ENCODE measurements at regions of chr6 and their contacts with region 1.

Region 1: GRCh38 chr6:169789982-169790927 is 38.8 kb downstream of the ERMARD start:
- DNase-seq: peak; percentile 82
- ATAC-seq: peak; percentile 89
- H3K4me3 ChIP-seq: peak overlapping the region; percentile 64 to 80 (median 65)
- H3K27ac ChIP-seq: peak overlapping the region; percentile 85
- H3K4me1 ChIP-seq: peaks cover 58% of the 10 kb centered on the region
- H3K27me3 ChIP-seq: no peaks in the 10 kb centered on the region
- CTCF ChIP-seq: peak; percentile 99
- EP300 ChIP-seq: 0 out of 4 replicates have a peak, but pooled peaks of 1 of the 2 experiments have one; percentile 5
- POLR2A ChIP-seq: peak; percentile 76 to 81
- RAD21 ChIP-seq: peak; percentile 99

Region 2: DNA sequence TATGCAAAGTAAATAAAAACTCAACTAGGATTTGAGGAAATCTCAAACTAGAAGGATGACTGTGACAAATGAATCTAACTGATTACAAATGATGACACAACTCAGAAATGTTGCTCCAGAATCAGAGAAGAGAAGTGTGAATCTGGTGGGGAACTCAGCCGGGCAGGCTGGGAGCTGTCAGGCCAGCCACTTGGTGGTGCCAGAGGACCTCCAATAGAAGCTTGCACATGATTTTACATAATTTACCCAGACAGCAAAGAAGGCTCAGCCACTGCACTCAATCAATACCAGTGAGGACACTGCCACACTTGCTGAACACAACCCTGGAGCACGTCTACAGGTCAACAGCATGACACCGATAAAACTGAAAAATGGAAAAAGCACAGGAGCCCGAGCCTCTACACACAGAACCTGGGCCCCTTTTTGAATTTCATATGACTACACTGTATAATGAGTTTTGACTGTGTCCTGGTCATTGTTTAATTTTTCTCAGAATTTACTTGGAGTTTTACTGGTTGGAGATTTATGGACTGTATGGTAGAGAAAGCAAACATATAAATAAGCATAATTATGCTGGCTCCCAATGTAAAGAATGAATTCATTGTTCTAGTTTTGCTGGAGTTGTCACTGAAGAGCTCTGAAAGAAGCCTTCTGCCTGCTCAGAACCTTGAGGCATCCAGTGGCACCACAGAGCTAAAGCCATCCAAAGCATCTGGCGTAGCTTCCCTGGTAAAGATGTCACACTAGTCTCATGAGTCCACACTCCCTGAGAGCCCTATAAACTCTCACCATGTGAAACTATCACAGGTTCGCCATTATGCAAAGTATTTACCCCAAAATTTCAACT is 833.1 kb before region 1 on chr6:
- CTCF ChIA-PET with region 1: no interaction called
- POLR2A ChIA-PET with region 1: no interaction called
- in situ Hi-C with region 1: no loop called
- intact Hi-C with region 1: loop called (anchors 1 kb)
- DNase-seq: peak; percentile 67
- ATAC-seq: peak; percentile 99
- H3K4me3 ChIP-seq: no peak overlapping the region
- H3K27ac ChIP-seq: no peak overlapping the region
- H3K4me1 ChIP-seq: no peaks in the 10 kb centered on the region
- H3K27me3 ChIP-seq: peaks cover 2 to 23% of the 10 kb centered on the region in 2 experiments; a peak in 3 of 5 replicates
- CTCF ChIP-seq: peak; percentile 92
- EP300 ChIP-seq: no peak
- POLR2A ChIP-seq: no peak
- RAD21 ChIP-seq: peak; percentile 86

Region 3: GRCh38 chr6:169723200-169723909 is 66.9 kb before region 1 on chr6:
- CTCF ChIA-PET with region 1: no interaction called
- POLR2A ChIA-PET with region 1: interaction called, 41 read pairs
- in situ Hi-C with region 1: no loop called
- intact Hi-C with region 1: no loop called
- DNase-seq: peak; percentile 39
- ATAC-seq: peak; percentile 20
- H3K4me3 ChIP-seq: peak overlapping the region; percentile 82 to 93 (median 90)
- H3K27ac ChIP-seq: peak overlapping the region; percentile 72
- H3K4me1 ChIP-seq: peaks cover 60% of the 10 kb centered on the region
- H3K27me3 ChIP-seq: no peaks in the 10 kb centered on the region; a peak in 1 of 5 replicates
- CTCF ChIP-seq: 0 out of 2 replicates have a peak, but pooled peaks have one; percentile 10
- EP300 ChIP-seq: no peak
- POLR2A ChIP-seq: no peak
- RAD21 ChIP-seq: peak; percentile 28; the same call in 1 of the 2 replicates

Region 4: GRCh38 chr6:169800668-169801395 is 10.6 kb after region 1 on chr6:
- CTCF ChIA-PET with region 1: interaction called, 4 read pairs
- POLR2A ChIA-PET with region 1: interaction called, 198 read pairs
- in situ Hi-C with region 1: no loop called
- intact Hi-C with region 1: loop called (anchors 1 kb)
- DNase-seq: peak; percentile 91
- ATAC-seq: peak; percentile 88
- H3K4me3 ChIP-seq: peak overlapping the region; percentile 41 to 74 (median 51)
- H3K27ac ChIP-seq: peak overlapping the region; percentile 82
- H3K4me1 ChIP-seq: peaks cover 80% of the 10 kb centered on the region
- H3K27me3 ChIP-seq: no peaks in the 10 kb centered on the region
- CTCF ChIP-seq: 0 out of 2 replicates have a peak, but pooled peaks have one; percentile 11
- EP300 ChIP-seq: peak; percentile 72 to 91
- POLR2A ChIP-seq: peak; percentile 55 to 72
- RAD21 ChIP-seq: no peak; the same call in 1 of the 2 replicates

Region 5: GRCh38 chr6:169883316-169883715 is 93.1 kb after region 1 on chr6:
- CTCF ChIA-PET with region 1: interaction called, 4 read pairs
- POLR2A ChIA-PET with region 1: no interaction called
- in situ Hi-C with region 1: loop called (anchors 5 kb)
- intact Hi-C with region 1: loop called (anchors 1 kb)
- DNase-seq: peak; percentile 20
- ATAC-seq: peak; percentile 68
- H3K4me3 ChIP-seq: no peak overlapping the region
- H3K27ac ChIP-seq: no peak overlapping the region
- H3K4me1 ChIP-seq: no peaks in the 10 kb centered on the region
- H3K27me3 ChIP-seq: peaks cover 2 to 60% of the 10 kb centered on the region in 2 experiments; a peak in 4 of 5 replicates
- CTCF ChIP-seq: peak; percentile 69
- EP300 ChIP-seq: no peak
- POLR2A ChIP-seq: no peak
- RAD21 ChIP-seq: no peak

Region 6: DNA sequence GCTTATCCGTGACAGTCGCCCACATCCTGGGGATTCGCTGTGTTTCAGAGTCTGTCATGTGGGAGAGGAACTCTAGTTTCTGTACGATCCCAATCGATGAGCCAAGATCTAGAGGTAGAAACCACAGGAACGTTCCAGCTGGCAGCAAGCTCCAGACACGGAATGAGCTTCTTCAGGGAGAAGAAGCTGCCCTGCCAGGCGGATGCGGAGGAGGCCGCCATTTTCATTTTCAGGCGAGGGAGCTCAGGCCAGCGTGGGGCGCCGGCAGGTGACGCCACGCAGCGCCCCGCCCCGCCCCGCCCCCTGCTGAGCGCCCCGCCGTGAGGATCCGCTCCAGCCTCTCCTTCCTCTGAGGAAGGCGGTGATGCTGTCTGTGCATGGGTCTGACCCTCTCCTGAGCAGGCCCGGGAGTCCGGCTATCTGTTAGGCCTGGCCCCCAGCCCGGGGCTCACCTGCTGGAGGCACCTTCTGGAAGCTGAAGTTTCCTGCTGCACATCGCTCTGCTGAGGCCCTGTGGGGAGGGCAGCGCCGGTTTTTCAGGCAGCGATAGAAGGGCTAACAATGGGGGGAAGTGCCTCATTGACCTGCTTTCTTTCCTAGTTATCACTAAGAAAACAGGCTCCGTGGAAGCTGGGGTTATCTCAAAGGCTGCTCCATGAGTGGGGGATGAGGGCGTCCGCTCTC is 108.7 kb after region 1 on chr6:
- CTCF ChIA-PET with region 1: no interaction called
- POLR2A ChIA-PET with region 1: no interaction called
- in situ Hi-C with region 1: no loop called
- intact Hi-C with region 1: no loop called
- DNase-seq: no peak
- ATAC-seq: peak; percentile 14
- H3K4me3 ChIP-seq: no peak overlapping the region
- H3K27ac ChIP-seq: no peak overlapping the region
- H3K4me1 ChIP-seq: no peaks in the 10 kb centered on the region
- H3K27me3 ChIP-seq: peaks cover 3 to 36% of the 10 kb centered on the region in 2 experiments; a peak in 3 of 5 replicates
- CTCF ChIP-seq: no peak
- EP300 ChIP-seq: no peak
- POLR2A ChIP-seq: no peak
- RAD21 ChIP-seq: no peak

Region 7: DNA sequence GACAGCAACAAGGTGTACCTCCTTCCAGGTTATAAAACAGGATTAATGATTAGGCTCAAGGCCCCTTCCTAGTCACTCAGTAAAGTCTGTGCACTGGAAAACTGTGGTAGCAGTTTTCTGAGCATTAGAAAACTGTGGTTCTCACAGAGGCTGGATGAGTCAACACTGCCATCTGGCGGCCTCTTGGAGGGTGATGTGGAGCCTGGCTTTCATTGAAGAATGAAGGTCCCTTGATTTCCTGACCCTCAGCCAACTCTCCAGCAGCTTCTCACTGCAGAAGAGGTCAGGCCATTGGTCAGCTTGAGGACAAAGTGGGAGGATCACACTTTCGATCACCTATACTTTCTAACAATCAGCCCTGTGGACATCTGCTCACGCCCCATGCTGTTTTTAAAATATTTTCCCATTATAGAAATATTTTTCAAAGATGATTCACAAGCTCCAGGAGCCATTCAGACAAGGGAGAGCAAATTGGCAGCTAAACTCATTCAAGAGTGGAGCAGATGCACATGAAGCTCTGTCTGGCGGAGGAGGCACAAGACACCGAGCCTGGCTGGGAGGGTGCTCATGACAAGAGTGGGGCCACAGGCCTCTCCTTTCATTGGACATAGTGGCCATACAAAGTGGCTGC is 739.7 kb after region 1 on chr6:
- CTCF ChIA-PET with region 1: interaction called, 3 read pairs
- POLR2A ChIA-PET with region 1: no interaction called
- in situ Hi-C with region 1: no loop called
- intact Hi-C with region 1: loop called (anchors 5 kb)
- DNase-seq: peak; percentile 69
- ATAC-seq: peak; percentile 91
- H3K4me3 ChIP-seq: no peak overlapping the region
- H3K27ac ChIP-seq: no peak overlapping the region
- H3K4me1 ChIP-seq: peaks cover 5% of the 10 kb centered on the region
- H3K27me3 ChIP-seq: no peaks in the 10 kb centered on the region; a peak in 1 of 5 replicates
- CTCF ChIP-seq: peak; percentile 89
- EP300 ChIP-seq: no peak
- POLR2A ChIP-seq: no peak
- RAD21 ChIP-seq: peak; percentile 87

Measured in HepG2 (cell line).